ENCODE measurements at regions of chr4 and their contacts with region 1.

Region 1: DNA sequence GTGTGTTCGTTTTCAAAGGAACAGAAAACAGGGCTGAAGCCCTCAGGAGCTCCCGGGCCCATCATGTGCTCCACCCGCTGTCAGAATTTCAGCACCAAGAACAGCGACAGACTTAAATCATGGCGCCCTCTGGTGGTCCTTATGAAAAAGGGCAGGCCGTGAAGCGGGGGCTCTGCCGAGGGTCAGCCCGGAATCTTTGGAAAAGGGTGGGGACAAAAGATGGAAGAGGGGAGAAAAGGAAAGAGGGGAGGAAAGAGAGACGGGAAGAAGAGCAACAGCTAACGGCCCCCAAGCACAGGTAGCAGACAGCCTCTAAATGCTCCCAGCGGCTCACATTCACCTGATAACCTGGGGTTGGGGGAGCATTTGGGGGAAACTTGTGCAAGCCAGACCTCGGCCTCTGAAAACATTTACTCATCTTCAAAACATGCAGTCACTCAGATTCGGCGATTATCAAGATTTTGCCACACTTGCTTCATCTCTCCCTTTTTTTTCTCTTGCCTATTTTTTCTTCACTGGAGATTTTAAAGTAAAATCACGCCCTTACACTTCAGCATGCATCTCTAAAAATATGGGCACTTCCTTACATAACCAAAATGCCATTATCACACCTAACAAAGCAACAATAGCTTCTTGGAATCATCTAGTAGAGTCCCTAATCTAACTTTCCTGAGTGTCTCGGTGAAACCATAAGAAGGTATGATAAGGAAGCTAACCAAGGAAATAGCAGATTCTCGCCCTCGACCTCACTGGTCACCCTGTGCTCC is 28.1 kb upstream of the MAN2B2 start:
- DNase-seq: peak; percentile 33
- H3K4me3 ChIP-seq: no peak overlapping the region
- H3K27ac ChIP-seq: no peak overlapping the region
- H3K27me3 ChIP-seq: peaks cover 3% of the 10 kb centered on the region
- CTCF ChIP-seq: peak; percentile 94

Region 2: GRCh38 chr4:6574747-6575502 is 28.1 kb after region 1 on chr4 and contains the start of gene MAN2B2:
- CTCF ChIA-PET with region 1: interaction called, 11 read pairs
- POLR2A ChIA-PET with region 1: no interaction called
- DNase-seq: peak; percentile 11
- H3K4me3 ChIP-seq: peak within 1 kb of the TSS; percentile 97
- H3K27ac ChIP-seq: no peak within 1 kb of the TSS
- H3K27me3 ChIP-seq: peaks cover 12% of the 10 kb centered on the region
- CTCF ChIP-seq: no peak
- polyA plus RNA-seq, gene MAN2B2: 22.8 and 28.1 TPM in 2 replicates

Region 3: DNA sequence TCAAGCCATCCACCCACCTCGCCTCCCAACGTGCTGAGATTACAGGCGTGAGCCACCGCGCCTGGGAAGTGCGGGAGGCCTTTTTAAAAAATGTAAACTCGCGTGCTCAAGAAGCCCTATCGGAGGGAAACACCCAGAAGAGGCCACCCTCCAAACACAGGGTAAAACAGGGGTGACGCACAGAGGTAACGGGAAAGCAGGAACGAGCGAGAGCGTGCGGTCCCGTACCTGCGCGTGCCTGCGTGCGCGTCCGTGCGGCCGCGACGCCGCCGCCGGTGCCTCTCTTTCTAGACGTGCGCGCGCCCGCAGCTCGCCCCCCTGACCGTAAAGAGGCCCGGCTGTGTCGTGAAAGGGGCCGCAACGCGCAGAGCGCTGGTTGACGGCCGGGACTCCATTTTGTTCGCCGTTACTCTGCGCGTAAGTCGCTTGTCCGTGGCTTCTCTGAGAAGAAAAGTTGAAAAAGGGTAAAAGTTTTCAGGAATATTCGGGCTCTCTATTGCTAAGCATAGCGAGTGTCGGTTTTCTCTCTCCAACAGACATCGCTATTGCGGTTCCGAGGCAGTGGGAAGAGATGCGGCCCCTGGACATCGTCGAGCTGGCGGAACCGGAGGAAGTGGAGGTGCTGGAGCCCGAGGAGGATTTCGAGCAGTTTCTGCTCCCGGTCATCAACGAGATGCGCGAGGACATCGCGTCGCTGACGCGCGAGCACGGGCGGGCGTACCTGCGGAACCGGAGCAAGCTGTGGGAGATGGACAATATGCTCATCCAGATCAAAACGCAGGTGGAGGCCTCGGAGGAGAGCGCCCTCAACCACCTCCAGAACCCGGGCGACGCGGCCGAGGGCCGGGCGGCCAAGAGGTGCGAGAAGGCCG is 93.7 kb after region 1 on chr4 and contains the start of gene MRFAP1:
- CTCF ChIA-PET with region 1: no interaction called
- POLR2A ChIA-PET with region 1: no interaction called
- DNase-seq: peak; percentile 76
- H3K4me3 ChIP-seq: peak within 1 kb of the TSS; percentile 73
- H3K27ac ChIP-seq: peak within 1 kb of the TSS; percentile 93
- H3K27me3 ChIP-seq: no peaks in the 10 kb centered on the region
- CTCF ChIP-seq: no peak
- polyA plus RNA-seq, gene MRFAP1: 252 and 298 TPM in 2 replicates

Measured in AG04450 (cell line).